Heart left ventricle (tissue), 16 donors: ENCODE measurements at regions of chr7 and their contacts with region 1.

Region 1: DNA sequence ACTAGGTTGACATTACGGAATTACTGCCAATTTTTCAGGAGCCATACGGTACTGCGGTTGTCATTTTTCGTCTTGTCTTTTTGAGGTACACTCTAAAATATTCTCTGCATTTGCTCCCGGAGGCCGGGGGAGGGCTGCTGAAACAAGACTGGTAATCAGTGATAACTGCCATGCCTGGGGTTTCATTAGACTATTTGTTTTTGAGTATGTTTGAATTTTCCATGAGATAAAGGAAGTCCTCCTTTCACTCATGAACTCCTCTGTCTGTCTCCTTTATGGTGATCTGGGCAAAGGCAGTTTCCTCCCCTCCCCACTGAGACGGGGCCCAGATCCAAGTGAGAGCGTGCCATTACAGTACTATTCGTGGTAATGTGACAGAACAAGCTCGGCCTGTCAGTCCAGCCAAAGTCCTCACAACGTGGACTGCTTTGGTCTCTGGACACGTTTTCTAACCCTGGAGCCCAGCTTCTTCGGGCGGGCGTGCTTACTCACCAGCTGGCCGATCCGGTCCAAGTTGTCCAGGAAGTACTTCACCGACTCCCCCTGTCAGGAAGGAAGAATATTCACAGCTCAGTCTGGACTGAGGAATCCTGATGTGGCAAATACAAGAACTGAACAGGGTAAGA is 45.1 kb downstream of the AMZ1 start:
- DNase-seq: peak; percentile 65 to 88 (median 81)
- ATAC-seq: peak; percentile 20 to 82 (median 70)
- H3K4me3 ChIP-seq: no peak overlapping the region
- H3K27ac ChIP-seq: peak overlapping the region in 11 of 12 donors; percentile 12 to 77 (median 66)
- H3K4me1 ChIP-seq: peaks cover 0 to 74% (median 36%) of the 10 kb centered on the region in 12 donors
- H3K27me3 ChIP-seq: no peaks in the 10 kb centered on the region
- CTCF ChIP-seq: peak in 3 of 12 donors; percentile 3 to 29 (median 9)
- POLR2A ChIP-seq: no peak

Region 2: DNA sequence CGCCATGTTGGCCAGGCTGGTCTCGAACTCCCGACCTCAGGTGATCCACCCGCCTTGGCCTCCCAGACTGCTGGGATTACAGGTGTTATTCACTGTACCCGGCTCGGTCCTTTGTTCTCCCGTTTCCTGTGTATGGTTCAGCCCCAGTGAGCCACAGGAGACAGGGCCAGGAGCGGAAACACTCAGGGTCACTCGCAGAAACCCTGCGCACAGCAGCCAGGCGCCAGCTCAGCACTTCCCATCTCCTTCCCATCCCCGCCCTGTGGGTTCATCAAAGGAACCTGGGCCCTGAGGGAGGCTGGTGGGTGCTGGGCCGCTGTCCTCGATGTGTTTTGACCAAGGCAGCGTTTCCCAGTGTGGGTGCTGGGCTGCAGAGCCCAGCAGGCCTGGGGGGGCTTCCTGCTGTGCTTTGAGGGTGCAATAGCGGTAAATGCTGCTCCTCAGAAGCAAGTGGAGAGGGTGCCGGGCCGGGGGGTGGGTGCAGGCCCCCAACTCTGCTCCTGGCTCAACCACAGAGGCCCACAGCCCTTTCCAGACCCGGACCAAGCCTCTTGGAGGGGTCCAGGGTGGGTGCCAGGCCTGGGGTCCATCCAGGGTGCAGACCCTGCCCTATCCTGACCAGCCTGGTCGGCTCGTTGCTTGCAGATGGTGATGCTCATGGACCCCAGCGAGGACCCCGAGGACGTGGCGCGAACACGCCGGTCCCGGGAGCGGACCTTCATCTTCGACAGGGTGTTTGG is 345.0 kb before region 1 on chr7:
- intact Hi-C with region 1: no loop called
- DNase-seq: peak in 4 of 5 donors; percentile 76 to 82 (median 78)
- ATAC-seq: peak; percentile 70 to 95 (median 80)
- H3K4me3 ChIP-seq: no peak overlapping the region
- H3K27ac ChIP-seq: peak overlapping the region in 5 of 12 donors; percentile 23 to 57 (median 39)
- H3K4me1 ChIP-seq: peaks cover 0 to 20% (median 11%) of the 10 kb centered on the region in 12 donors
- H3K27me3 ChIP-seq: no peaks in the 10 kb centered on the region
- CTCF ChIP-seq: no peak
- POLR2A ChIP-seq: no peak

Region 3: DNA sequence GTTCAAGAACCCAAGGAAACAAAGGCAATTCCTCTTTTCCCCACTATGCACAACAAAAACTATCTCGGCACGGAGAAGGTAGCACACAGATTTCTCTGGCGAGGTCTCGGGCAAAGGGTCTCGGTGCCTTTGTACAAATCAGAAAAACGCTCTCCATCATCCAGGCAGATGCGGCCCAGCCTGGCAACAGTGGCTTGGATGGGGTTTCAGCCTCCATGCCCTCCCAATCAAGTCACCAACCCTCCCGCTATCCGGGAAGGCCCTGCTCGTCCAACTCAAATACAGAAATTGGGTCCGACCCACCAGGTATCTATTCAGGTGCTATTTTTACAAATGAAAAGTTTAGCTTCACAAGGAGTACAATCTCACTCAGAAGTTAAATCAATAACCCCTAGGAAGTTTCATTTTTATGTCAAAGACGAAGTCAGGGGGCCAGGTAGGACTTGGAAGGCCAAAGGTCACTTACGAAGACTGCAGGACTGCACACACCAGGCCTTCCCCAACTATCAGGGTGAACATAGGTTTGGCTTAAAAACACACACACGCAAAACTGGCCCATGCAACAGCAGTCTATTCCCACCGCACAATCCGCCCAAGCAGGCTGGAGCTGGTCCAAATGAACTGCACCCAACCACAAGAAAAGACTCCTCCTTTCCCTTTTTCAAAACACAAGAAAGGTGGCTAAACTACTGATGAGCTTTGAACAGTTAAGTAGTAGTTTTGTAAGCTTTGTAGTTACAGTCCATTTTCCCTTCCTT is 68.0 kb after region 1 on chr7:
- intact Hi-C with region 1: loop called in 1 of 10 experiments (anchors 10 kb)
- DNase-seq: peak; percentile 63 to 77 (median 68)
- ATAC-seq: peak in 1 of 4 donors; percentile 19
- H3K4me3 ChIP-seq: no peak overlapping the region
- H3K27ac ChIP-seq: peak overlapping the region in 11 of 12 donors; percentile 49 to 84 (median 75)
- H3K4me1 ChIP-seq: peaks cover 3 to 77% (median 60%) of the 10 kb centered on the region in 12 donors
- H3K27me3 ChIP-seq: no peaks in the 10 kb centered on the region
- CTCF ChIP-seq: no peak
- POLR2A ChIP-seq: no peak

Region 4: GRCh38 chr7:2811476-2812113 is 78.5 kb after region 1 on chr7:
- intact Hi-C with region 1: loop called in 2 of 10 experiments (anchors 5 to 10 kb)
- DNase-seq: peak in 1 of 5 donors; percentile 55
- ATAC-seq: peak in 3 of 4 donors; percentile 35 to 58 (median 45)
- H3K4me3 ChIP-seq: peak overlapping the region in 9 of 12 donors; percentile 9 to 45 (median 34)
- H3K27ac ChIP-seq: peak overlapping the region; percentile 45 to 85 (median 76)
- H3K4me1 ChIP-seq: peaks cover 0 to 70% (median 46%) of the 10 kb centered on the region in 12 donors
- H3K27me3 ChIP-seq: no peaks in the 10 kb centered on the region
- CTCF ChIP-seq: no peak
- POLR2A ChIP-seq: no peak

Region 5: GRCh38 chr7:2844165-2844898 is 111.3 kb after region 1 on chr7 and contains the start of gene GNA12:
- intact Hi-C with region 1: loop called in 4 of 10 experiments (anchors 5 to 10 kb)
- DNase-seq: peak; percentile 98 to 99 (median 98)
- ATAC-seq: peak; percentile 95 to 99 (median 97)
- H3K4me3 ChIP-seq: peak within 1 kb of the TSS; percentile 64 to 94 (median 78)
- H3K27ac ChIP-seq: peak within 1 kb of the TSS in 11 of 12 donors; percentile 22 to 81 (median 68)
- H3K4me1 ChIP-seq: peaks cover 0 to 45% (median 27%) of the 10 kb centered on the region in 12 donors
- H3K27me3 ChIP-seq: no peaks in the 10 kb centered on the region
- CTCF ChIP-seq: no peak
- POLR2A ChIP-seq: peak in 1 of 2 donors; percentile 28
- total RNA-seq, gene GNA12: 30.0 to 56.5 (median 34.9) TPM